ENCODE measurements at regions of chr1 and their contacts with region 1.

Region 1: GRCh38 chr1:55277377-55278130 is 62.4 kb upstream of the USP24 start:
- DNase-seq: peak; percentile 78
- H3K4me3 ChIP-seq: no peak overlapping the region
- H3K27ac ChIP-seq: peak overlapping the region; percentile 37
- H3K4me1 ChIP-seq: peaks cover 22% of the 10 kb centered on the region
- H3K27me3 ChIP-seq: no peaks in the 10 kb centered on the region
- CTCF ChIP-seq: peak; percentile 87

Region 2: DNA sequence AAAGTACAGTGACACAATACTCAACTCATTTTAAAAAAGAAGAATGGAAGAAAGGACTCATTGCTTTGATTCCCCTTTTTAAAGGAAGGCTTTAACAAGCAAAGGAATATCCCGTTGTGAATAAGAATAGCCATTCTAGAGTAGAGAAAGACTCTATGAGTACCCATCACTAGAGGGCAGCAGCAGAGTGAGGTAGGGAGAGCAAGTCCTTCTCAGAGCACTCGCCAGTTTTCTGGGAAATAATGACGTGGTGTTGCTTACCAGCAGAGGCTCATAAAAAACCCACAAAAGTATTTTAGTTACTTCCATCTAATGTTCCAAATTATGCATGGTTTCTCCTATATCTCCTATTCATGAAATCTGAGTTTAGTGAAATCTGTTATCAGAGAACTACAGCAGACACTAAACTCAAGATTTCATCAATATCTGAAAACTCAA is 137.0 kb before region 1 on chr1:
- intact Hi-C with region 1: loop called (anchors 5 kb)
- DNase-seq: peak; percentile 19
- H3K4me3 ChIP-seq: no peak overlapping the region
- H3K27ac ChIP-seq: no peak overlapping the region
- H3K4me1 ChIP-seq: peaks cover 5% of the 10 kb centered on the region
- H3K27me3 ChIP-seq: no peaks in the 10 kb centered on the region
- CTCF ChIP-seq: peak; percentile 90